CD8-positive, alpha-beta T cell (primary cell): ENCODE measurements at regions of chr10 and their contacts with region 1.

Region 1: GRCh38 chr10:110497438-110498086 is at the start of gene DUSP5:
- DNase-seq: peak; percentile 89 to 98 (median 94)
- ATAC-seq: peak; percentile 92
- H3K4me3 ChIP-seq: peak within 1 kb of the TSS; percentile 67 to 91
- H3K4me3 Mint-ChIP-seq: peak within 1 kb of the TSS; percentile 91
- H3K27ac ChIP-seq: peak within 1 kb of the TSS; percentile 50 to 63
- H3K27ac Mint-ChIP-seq: peak within 1 kb of the TSS; percentile 91
- H3K4me1 ChIP-seq: peaks cover 41% of the 10 kb centered on the region
- H3K4me1 Mint-ChIP-seq: peaks cover 50% of the 10 kb centered on the region
- H3K27me3 ChIP-seq: no peaks in the 10 kb centered on the region
- H3K27me3 Mint-ChIP-seq: no peaks in the 10 kb centered on the region
- CTCF ChIP-seq: no peak
- total RNA-seq, gene DUSP5: 69.8 TPM

Region 2: GRCh38 chr10:110137142-110137545 is 360.4 kb before region 1 on chr10:
- CTCF ChIA-PET with region 1: no interaction called
- POLR2A ChIA-PET with region 1: no interaction called
- intact Hi-C with region 1: loop called (anchors 5 kb)
- DNase-seq: peak in 2 of 9 experiments; percentile 67 to 79
- ATAC-seq: peak; percentile 74
- H3K4me3 ChIP-seq: no peak overlapping the region
- H3K4me3 Mint-ChIP-seq: no peak overlapping the region
- H3K27ac ChIP-seq: peak overlapping the region in 1 of 2 experiments; percentile 2
- H3K27ac Mint-ChIP-seq: peak overlapping the region; percentile 23
- H3K4me1 ChIP-seq: peaks cover 9% of the 10 kb centered on the region
- H3K4me1 Mint-ChIP-seq: peaks cover 21% of the 10 kb centered on the region
- H3K27me3 ChIP-seq: no peaks in the 10 kb centered on the region
- H3K27me3 Mint-ChIP-seq: no peaks in the 10 kb centered on the region
- CTCF ChIP-seq: peak; percentile 97

Region 3: DNA sequence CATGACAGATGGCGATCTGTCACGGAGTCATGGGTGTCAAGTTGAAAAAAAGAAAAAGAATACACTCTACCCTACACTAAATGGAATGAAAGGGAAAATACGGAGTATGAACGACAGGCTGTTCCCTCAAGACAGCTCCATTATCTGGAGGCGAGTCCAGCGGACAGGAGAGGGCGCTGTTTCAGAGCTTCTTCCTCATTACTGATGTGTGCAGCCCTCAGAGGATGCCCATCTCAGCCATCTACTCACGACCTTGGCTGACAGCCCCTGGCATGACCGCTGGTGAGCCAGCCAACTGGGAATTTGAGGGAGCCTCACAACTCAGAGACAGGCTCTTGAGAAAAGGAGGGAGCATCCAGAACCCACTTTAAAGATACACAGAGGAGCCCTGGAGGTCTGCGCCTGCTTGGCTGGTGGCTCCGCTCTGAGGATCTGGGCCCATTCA is 143.2 kb before region 1 on chr10:
- CTCF ChIA-PET with region 1: interaction called, 7 read pairs
- POLR2A ChIA-PET with region 1: interaction called, 3 read pairs
- intact Hi-C with region 1: loop called (anchors 1 to 2 kb)
- DNase-seq: peak; percentile 54 to 84 (median 75)
- ATAC-seq: no peak
- H3K4me3 ChIP-seq: no peak overlapping the region
- H3K4me3 Mint-ChIP-seq: no peak overlapping the region
- H3K27ac ChIP-seq: no peak overlapping the region
- H3K27ac Mint-ChIP-seq: no peak overlapping the region
- H3K4me1 ChIP-seq: peaks cover 9% of the 10 kb centered on the region
- H3K4me1 Mint-ChIP-seq: peaks cover 48% of the 10 kb centered on the region
- H3K27me3 ChIP-seq: no peaks in the 10 kb centered on the region
- H3K27me3 Mint-ChIP-seq: no peaks in the 10 kb centered on the region
- CTCF ChIP-seq: peak; percentile 63

Region 4: DNA sequence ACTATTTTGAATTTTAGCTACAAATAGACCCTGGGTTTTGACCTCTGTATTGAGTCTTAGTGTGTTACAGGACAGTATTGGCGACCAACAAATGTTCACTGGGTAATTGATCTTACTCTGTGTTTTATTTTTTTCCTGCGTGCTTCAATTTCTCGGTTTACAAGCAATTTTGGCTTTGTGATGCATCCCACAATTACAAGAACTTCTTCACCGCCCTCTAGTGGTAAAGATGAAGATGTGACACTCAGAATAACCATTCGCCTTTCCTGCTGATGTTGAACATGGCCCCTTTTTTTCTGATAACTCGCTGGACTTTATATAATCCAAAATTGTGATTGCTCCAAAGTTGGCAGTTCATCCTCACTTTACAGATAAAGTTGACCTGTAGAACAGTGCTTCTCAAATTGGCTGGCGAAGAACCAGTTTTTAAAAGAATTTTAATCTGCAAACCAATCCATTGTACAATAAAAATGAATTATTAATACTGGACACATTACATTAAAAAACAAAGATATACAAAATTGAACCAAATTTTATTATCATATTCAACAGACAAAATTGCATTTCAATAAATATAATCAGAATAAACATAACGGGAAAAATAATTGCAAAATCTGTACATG is 49.7 kb after region 1 on chr10:
- CTCF ChIA-PET with region 1: interaction called, 10 read pairs
- POLR2A ChIA-PET with region 1: interaction called, 3 read pairs
- intact Hi-C with region 1: loop called (anchors 5 kb)
- DNase-seq: peak in 2 of 9 experiments; percentile 66 to 79
- ATAC-seq: peak; percentile 88
- H3K4me3 ChIP-seq: no peak overlapping the region
- H3K4me3 Mint-ChIP-seq: no peak overlapping the region
- H3K27ac ChIP-seq: no peak overlapping the region
- H3K27ac Mint-ChIP-seq: no peak overlapping the region
- H3K4me1 ChIP-seq: no peaks in the 10 kb centered on the region
- H3K4me1 Mint-ChIP-seq: peaks cover 4% of the 10 kb centered on the region
- H3K27me3 ChIP-seq: no peaks in the 10 kb centered on the region
- H3K27me3 Mint-ChIP-seq: peaks cover 16% of the 10 kb centered on the region
- CTCF ChIP-seq: peak; percentile 92

Region 5: GRCh38 chr10:112183329-112184051 is 1685.9 kb after region 1 on chr10 and contains the start of gene GPAM:
- CTCF ChIA-PET with region 1: no interaction called
- POLR2A ChIA-PET with region 1: no interaction called
- intact Hi-C with region 1: loop called in 1 of 2 experiments (anchors 5 kb)
- DNase-seq: peak; percentile 95 to 100 (median 99)
- ATAC-seq: peak; percentile 98
- H3K4me3 ChIP-seq: peak within 1 kb of the TSS; percentile 65 to 92
- H3K4me3 Mint-ChIP-seq: peak within 1 kb of the TSS; percentile 87
- H3K27ac ChIP-seq: peak within 1 kb of the TSS; percentile 76 to 78
- H3K27ac Mint-ChIP-seq: peak within 1 kb of the TSS; percentile 93
- H3K4me1 ChIP-seq: peaks cover 17% of the 10 kb centered on the region
- H3K4me1 Mint-ChIP-seq: peaks cover 28% of the 10 kb centered on the region
- H3K27me3 ChIP-seq: no peaks in the 10 kb centered on the region
- H3K27me3 Mint-ChIP-seq: no peaks in the 10 kb centered on the region
- CTCF ChIP-seq: no peak
- total RNA-seq, gene GPAM: 3.2 to 4.2 TPM